ENCODE measurements at regions of chr15 and their contacts with region 1.

Region 1: GRCh38 chr15:65400760-65401610 is 21.8 kb downstream of the IGDCC4 start:
- DNase-seq: peak; percentile 69
- H3K4me3 Mint-ChIP-seq: no peak overlapping the region
- H3K27ac Mint-ChIP-seq: no peak overlapping the region
- H3K4me1 Mint-ChIP-seq: no peaks in the 10 kb centered on the region
- H3K27me3 Mint-ChIP-seq: peaks cover 34% of the 10 kb centered on the region
- CTCF ChIP-seq: peak; percentile 72

Region 2: GRCh38 chr15:65318870-65319356 is 82.1 kb before region 1 on chr15:
- CTCF ChIA-PET with region 1: interaction called, 25 read pairs
- POLR2A ChIA-PET with region 1: interaction called, 4 read pairs
- intact Hi-C with region 1: loop called (anchors 1 kb)
- DNase-seq: peak; percentile 83
- H3K4me3 Mint-ChIP-seq: no peak overlapping the region
- H3K27ac Mint-ChIP-seq: no peak overlapping the region
- H3K4me1 Mint-ChIP-seq: no peaks in the 10 kb centered on the region
- H3K27me3 Mint-ChIP-seq: peaks cover 11% of the 10 kb centered on the region
- CTCF ChIP-seq: peak; percentile 91

Region 3: DNA sequence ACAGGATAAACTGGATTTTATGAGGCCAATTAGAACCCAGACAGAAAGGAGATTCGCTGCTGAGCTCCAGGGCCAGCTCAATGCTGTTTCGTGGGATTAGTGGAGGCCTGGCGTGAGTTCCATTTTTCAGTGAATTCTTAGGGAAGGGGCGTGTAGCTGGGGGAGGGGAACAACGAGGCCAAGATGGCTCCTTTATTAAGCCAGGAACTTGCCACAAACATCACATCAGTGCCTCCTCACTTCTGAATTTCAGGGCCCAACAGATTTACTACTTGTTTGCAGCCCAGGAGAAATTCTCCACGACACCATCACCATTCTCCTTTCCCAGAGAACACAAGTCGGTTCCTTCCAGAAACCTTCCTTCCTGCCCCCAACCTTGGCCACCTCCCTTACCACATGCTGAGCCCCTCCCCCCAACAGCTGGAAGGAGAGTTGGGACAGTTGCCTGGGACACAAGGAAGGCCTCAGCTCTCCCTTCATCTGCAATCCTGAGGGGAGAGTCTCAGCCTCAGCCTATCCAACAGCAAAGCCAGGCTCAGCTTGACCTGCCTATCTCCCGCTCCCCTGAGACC is 15.9 kb after region 1 on chr15:
- CTCF ChIA-PET with region 1: interaction called, 13 read pairs
- POLR2A ChIA-PET with region 1: no interaction called
- intact Hi-C with region 1: no loop called
- DNase-seq: no peak
- H3K4me3 Mint-ChIP-seq: no peak overlapping the region
- H3K27ac Mint-ChIP-seq: no peak overlapping the region
- H3K4me1 Mint-ChIP-seq: peaks cover 2% of the 10 kb centered on the region
- H3K27me3 Mint-ChIP-seq: peaks cover 16% of the 10 kb centered on the region
- CTCF ChIP-seq: no peak

Region 4: DNA sequence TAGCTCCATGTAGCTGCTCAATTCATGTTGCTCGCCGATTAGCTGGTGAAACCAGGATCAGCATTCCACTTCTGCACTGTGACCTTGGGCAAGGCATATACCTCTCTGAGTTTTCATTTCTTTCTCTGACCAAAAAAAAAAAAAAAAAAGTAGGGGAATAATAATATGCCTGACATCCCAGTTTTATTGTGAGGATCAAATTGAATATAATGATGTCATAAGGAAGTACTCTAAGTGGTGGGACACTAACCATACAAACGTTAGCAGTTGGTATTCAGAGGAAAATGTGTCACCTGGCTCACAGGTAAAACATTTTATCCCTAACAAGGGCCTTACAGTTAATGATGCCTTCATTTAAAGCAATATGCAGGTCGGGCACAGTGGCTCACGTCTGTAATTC is 34.0 kb after region 1 on chr15:
- CTCF ChIA-PET with region 1: interaction called, 3 read pairs
- POLR2A ChIA-PET with region 1: no interaction called
- intact Hi-C with region 1: loop called (anchors 1 kb)
- DNase-seq: no peak
- H3K4me3 Mint-ChIP-seq: no peak overlapping the region
- H3K27ac Mint-ChIP-seq: no peak overlapping the region
- H3K4me1 Mint-ChIP-seq: peaks cover 8% of the 10 kb centered on the region
- H3K27me3 Mint-ChIP-seq: no peaks in the 10 kb centered on the region
- CTCF ChIP-seq: no peak

Region 5: GRCh38 chr15:65752151-65752700 is 351.2 kb after region 1 on chr15:
- CTCF ChIA-PET with region 1: no interaction called
- POLR2A ChIA-PET with region 1: no interaction called
- intact Hi-C with region 1: no loop called
- DNase-seq: no peak
- H3K4me3 Mint-ChIP-seq: no peak overlapping the region
- H3K27ac Mint-ChIP-seq: no peak overlapping the region
- H3K4me1 Mint-ChIP-seq: no peaks in the 10 kb centered on the region
- H3K27me3 Mint-ChIP-seq: no peaks in the 10 kb centered on the region
- CTCF ChIP-seq: no peak